ENCODE measurements at regions of chr10 and their contacts with region 1.

Region 1: DNA sequence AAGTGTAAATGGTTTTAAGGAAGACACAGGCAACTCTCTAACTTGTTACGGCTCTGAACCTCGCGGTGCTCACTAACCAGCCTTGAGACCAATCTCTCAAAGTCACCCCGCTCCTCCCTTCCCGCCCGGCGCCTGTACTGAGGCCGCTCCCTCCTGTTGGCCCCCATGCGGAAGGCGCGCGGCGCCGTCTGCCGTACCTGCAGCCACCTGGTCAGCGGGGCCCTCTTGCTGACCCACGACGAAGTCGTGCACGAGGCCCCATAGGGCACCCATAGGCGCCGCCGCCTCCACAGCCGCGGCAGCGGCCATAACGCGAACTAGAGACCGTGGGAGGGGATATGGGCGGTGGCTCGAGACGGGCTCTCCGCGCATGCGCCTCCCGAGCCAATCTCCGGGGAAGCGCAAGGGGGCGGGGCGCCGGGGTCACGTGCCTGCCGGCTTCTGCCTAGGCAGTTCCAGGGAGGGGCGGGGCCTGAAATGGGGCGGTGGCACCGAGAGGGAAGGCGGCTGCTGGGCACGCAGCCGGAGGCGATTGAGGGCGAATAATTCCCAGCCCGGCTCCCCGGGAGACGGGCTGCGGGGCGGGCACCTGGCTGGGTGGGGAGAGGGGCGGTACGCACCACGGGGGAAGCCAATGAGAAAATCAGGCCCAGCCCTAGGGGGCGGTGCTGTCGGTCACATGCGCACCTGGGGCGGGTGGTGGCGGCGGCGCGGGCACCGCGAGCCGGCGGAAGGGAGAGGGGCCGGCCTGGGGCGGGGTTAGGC is at the start of gene MMS19:
- DNase-seq: peak; percentile 99
- H3K4me3 Mint-ChIP-seq: peak within 1 kb of the TSS; percentile 91
- H3K27ac Mint-ChIP-seq: peak within 1 kb of the TSS; percentile 99
- H3K4me1 Mint-ChIP-seq: peaks cover 34% of the 10 kb centered on the region
- H3K27me3 Mint-ChIP-seq: peaks cover 33% of the 10 kb centered on the region
- total RNA-seq, gene MMS19: 106 and 108 TPM in 2 replicates

Region 2: GRCh38 chr10:97292097-97292862 is 206.0 kb before region 1 on chr10 and contains the start of gene ARHGAP19:
- intact Hi-C with region 1: loop called (anchors 1 kb)
- DNase-seq: peak; percentile 93
- H3K4me3 Mint-ChIP-seq: peak within 1 kb of the TSS; percentile 94
- H3K27ac Mint-ChIP-seq: peak within 1 kb of the TSS; percentile 83
- H3K4me1 Mint-ChIP-seq: peaks cover 24% of the 10 kb centered on the region
- H3K27me3 Mint-ChIP-seq: no peaks in the 10 kb centered on the region
- total RNA-seq, gene ARHGAP19: 25.3 and 29.9 TPM in 2 replicates

Region 3: DNA sequence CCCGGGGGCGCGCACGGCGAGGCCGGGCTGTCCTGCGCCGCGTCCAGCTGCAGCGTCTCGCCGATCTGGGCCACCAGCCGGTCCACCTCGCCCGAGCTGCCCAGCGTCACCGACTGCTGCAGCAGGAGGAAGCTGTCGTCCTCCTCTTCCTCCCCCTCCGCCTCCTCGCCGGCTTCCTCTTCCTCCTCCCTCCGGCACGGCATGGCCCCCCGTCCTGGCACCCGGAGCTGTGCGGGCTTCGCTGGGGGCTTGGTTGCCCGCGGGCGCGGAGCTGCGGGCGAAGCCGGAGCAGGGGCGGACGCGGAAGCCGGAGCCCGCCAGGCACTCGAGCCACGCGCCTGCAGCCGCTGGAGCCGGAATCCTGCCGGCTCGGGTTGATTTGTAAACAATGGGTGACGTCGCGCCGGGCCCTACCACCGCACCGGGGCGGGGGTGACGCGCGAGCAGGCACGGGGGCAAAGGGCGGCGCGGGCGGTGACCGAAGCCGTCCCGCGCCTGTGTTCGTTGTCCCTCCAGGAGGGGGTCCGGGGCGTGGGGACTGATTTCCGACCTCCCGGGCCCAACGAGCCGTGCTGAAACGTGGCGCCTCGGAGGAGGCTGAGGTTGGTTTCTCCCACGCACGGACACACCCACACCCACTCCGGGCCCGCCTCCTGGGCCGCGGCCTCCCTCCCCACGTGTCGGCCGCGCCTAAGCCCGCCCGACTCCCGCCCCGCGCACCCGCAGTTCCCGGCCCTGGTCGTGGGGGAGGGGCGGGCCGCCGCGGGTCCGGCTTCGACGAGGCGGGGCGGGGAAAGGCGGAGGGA is 163.7 kb before region 1 on chr10 and contains the start of gene FRAT2:
- intact Hi-C with region 1: loop called (anchors 5 kb)
- DNase-seq: peak; percentile 85
- H3K4me3 Mint-ChIP-seq: peak within 1 kb of the TSS; percentile 85
- H3K27ac Mint-ChIP-seq: peak within 1 kb of the TSS; percentile 86
- H3K4me1 Mint-ChIP-seq: peaks cover 25% of the 10 kb centered on the region
- H3K27me3 Mint-ChIP-seq: peaks cover 22% of the 10 kb centered on the region
- total RNA-seq, gene FRAT2: 10.4 and 10.6 TPM in 2 replicates

Region 4: GRCh38 chr10:97425964-97426775 is 72.1 kb before region 1 on chr10 and contains the start of gene PGAM1:
- intact Hi-C with region 1: loop called (anchors 2 kb)
- DNase-seq: peak; percentile 96
- H3K4me3 Mint-ChIP-seq: peak within 1 kb of the TSS; percentile 86
- H3K27ac Mint-ChIP-seq: peak within 1 kb of the TSS; percentile 98
- H3K4me1 Mint-ChIP-seq: peaks cover 34% of the 10 kb centered on the region
- H3K27me3 Mint-ChIP-seq: no peaks in the 10 kb centered on the region
- total RNA-seq, gene PGAM1: 877 and 885 TPM in 2 replicates

Region 5: GRCh38 chr10:97543025-97543575 is 44.8 kb after region 1 on chr10:
- intact Hi-C with region 1: loop called (anchors 2 kb)
- DNase-seq: peak; percentile 18
- H3K4me3 Mint-ChIP-seq: no peak overlapping the region
- H3K27ac Mint-ChIP-seq: peak overlapping the region; percentile 43
- H3K4me1 Mint-ChIP-seq: peaks cover 22% of the 10 kb centered on the region
- H3K27me3 Mint-ChIP-seq: no peaks in the 10 kb centered on the region